GM13976 (cell line): ENCODE measurements at regions of chr11 and their contacts with region 1.

Region 1: GRCh38 chr11:106733635-106734034 is 284.6 kb downstream of the GUCY1A2 start:
- DNase-seq: no peak
- CTCF ChIP-seq: no peak

Region 2: DNA sequence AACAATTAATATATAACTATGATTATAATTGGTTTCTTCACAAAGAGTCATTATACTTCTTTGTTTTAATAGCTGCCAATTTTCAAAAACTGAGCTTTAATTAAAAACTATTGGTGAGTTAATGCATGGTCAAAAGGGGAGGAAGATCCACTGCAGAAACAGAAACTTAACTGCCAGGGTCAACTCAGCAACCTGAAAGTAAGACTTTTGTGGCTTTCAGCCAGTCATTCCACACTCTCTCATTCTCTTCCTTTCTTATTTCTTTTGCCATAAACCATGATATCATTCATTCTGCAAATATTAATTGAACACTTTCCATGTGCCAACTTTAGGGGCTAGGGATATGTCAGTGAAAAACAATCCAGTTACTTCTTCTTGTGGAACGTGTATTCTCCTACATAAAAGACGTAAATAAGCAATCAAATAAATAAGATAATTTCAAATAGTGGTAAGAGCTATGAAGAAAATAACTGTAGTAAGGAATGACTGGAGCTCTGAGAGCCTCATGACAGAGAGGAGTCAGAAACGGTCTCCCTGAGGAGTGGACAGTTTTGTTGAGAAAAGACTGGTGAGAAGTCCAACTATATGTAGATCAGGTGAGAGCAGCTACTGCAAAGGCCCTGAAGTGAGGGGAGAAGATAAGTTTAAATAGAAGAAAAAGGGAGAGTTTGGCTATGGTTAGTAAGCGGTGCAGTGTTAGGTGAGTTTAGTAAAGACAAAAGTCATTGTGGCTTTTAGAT is 993.3 kb before region 1 on chr11:
- in situ Hi-C with region 1: no loop called
- DNase-seq: peak; percentile 0
- CTCF ChIP-seq: no peak

Region 3: DNA sequence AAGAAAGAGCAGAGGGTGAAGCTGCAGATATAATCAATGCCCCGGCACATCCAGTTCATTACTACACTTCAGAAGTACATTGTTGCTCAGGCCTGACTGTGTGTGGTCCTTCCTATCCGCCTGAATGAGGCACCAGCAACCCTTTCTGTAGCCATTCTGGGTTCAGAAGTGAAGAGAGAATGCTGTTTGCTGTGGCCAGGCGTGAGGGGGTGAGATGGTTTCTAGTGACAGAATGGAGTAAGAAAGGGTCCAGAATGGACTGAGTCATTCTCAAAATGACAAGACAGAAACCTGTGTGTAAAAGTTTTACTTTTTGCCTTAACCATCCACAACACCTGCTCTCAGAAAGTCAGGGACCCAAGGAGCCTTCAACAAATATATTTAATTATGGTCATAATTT is 50.2 kb before region 1 on chr11:
- in situ Hi-C with region 1: no loop called
- DNase-seq: no peak
- CTCF ChIP-seq: no peak

Region 4: GRCh38 chr11:107017433-107018227 is 284.0 kb after region 1 on chr11:
- in situ Hi-C with region 1: loop called (anchors 25 kb)
- DNase-seq: peak; percentile 71
- CTCF ChIP-seq: peak; percentile 54